A673 (cell line): ENCODE measurements at regions of chr2 and their contacts with region 1.

Region 1: GRCh38 chr2:27703638-27704341 is 40.1 kb downstream of the SLC4A1AP start:
- DNase-seq: peak; percentile 88
- H3K4me3 ChIP-seq: no peak overlapping the region
- H3K27ac ChIP-seq: no peak overlapping the region
- H3K4me1 ChIP-seq: no peaks in the 10 kb centered on the region
- H3K27me3 ChIP-seq: no peaks in the 10 kb centered on the region
- CTCF ChIP-seq: peak; percentile 96

Region 2: GRCh38 chr2:27989141-27989540 is 285.4 kb after region 1 on chr2:
- CTCF ChIA-PET with region 1: no interaction called
- POLR2A ChIA-PET with region 1: interaction called, 18 read pairs
- intact Hi-C with region 1: no loop called
- DNase-seq: no peak
- H3K4me3 ChIP-seq: no peak overlapping the region
- H3K27ac ChIP-seq: no peak overlapping the region
- H3K4me1 ChIP-seq: no peaks in the 10 kb centered on the region
- H3K27me3 ChIP-seq: no peaks in the 10 kb centered on the region
- CTCF ChIP-seq: no peak

Region 3: GRCh38 chr2:28452534-28453081 is 748.8 kb after region 1 on chr2:
- CTCF ChIA-PET with region 1: no interaction called
- POLR2A ChIA-PET with region 1: no interaction called
- intact Hi-C with region 1: loop called (anchors 5 kb)
- DNase-seq: peak; percentile 42
- H3K4me3 ChIP-seq: no peak overlapping the region
- H3K27ac ChIP-seq: no peak overlapping the region
- H3K4me1 ChIP-seq: no peaks in the 10 kb centered on the region
- H3K27me3 ChIP-seq: no peaks in the 10 kb centered on the region
- CTCF ChIP-seq: peak; percentile 89